ENCODE measurements at regions of chr9 and their contacts with region 1.

Region 1: DNA sequence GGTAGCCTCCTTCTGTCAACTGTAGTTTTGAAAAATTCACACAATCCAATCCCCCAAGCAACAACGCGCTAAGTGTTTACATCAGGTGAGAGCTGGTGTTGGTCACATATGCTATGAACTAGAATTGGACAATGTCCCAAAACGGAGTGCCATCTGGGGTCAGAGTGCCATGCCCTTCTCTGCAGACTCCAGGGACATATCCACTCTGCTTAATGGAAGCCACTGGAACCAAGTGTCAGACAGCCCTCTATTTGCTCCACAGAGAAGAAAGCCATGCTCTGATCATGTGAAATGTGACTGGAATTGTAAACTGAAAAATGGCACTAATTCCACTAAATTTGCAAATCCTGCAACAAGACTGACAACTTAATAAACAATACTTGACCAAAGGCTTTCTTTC is 12.2 kb downstream of the ABCA1 start:
- DNase-seq: no peak
- ATAC-seq: no peak
- H3K4me3 ChIP-seq: no peak overlapping the region
- H3K4me3 Mint-ChIP-seq: no peak overlapping the region
- H3K27ac ChIP-seq: no peak overlapping the region
- H3K27ac Mint-ChIP-seq: no peak overlapping the region
- H3K4me1 ChIP-seq: no peaks in the 10 kb centered on the region
- H3K4me1 Mint-ChIP-seq: peaks cover 0 to 62% (median 7%) of the 10 kb centered on the region in 7 donors
- H3K27me3 ChIP-seq: no peaks in the 10 kb centered on the region
- H3K27me3 Mint-ChIP-seq: peaks cover 0 to 22% (median 0%) of the 10 kb centered on the region in 5 donors

Region 2: DNA sequence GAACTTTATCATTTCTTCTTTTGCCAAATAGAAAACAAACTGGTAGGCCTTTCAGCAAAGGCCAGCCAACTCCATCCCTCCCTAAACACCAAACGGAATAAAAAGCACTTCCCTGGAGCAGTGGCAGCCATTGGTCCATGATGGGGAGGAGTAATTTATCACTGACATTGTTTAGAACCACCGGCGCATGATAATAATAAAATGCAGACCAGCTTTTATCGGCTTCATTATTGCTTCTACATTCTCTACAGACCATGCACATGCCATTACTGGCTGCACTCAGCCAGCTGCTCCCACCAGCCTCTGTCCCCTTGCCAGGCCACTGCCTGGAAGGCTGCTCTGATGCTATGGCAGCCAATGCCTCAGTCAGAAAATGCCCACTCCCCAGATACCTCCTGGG is 33.7 kb before region 1 on chr9:
- CTCF ChIA-PET with region 1: no interaction called
- POLR2A ChIA-PET with region 1: no interaction called
- intact Hi-C with region 1: loop called in 1 of 2 experiments (anchors 1 kb)
- DNase-seq: no peak
- ATAC-seq: no peak
- H3K4me3 ChIP-seq: no peak overlapping the region
- H3K4me3 Mint-ChIP-seq: no peak overlapping the region
- H3K27ac ChIP-seq: no peak overlapping the region
- H3K27ac Mint-ChIP-seq: peak overlapping the region in 1 of 9 donors; percentile 12
- H3K4me1 ChIP-seq: no peaks in the 10 kb centered on the region
- H3K4me1 Mint-ChIP-seq: peaks cover 0 to 7% (median 0%) of the 10 kb centered on the region in 7 donors
- H3K27me3 ChIP-seq: no peaks in the 10 kb centered on the region
- H3K27me3 Mint-ChIP-seq: no peaks in the 10 kb centered on the region

Region 3: DNA sequence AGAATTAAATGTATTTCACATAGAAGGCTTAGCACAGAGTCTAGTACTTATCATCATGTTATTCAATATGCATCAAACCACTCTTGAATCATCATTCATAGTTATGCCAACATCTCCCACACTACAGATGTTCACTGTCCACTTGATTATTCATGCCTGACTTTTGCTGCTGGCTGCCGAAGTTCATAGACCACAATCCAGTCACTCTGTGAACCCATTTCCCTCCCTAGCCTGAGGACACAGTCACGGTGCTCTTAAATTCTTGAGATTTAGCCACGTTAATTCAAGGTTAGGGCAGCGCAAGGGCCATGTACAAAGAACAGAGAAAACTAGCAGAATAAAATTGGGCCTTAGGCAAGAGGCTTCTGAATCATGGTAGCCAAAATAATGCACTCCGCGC is 20.2 kb before region 1 on chr9:
- CTCF ChIA-PET with region 1: no interaction called
- POLR2A ChIA-PET with region 1: no interaction called
- intact Hi-C with region 1: no loop called
- DNase-seq: no peak
- ATAC-seq: no peak
- H3K4me3 ChIP-seq: no peak overlapping the region
- H3K4me3 Mint-ChIP-seq: no peak overlapping the region
- H3K27ac ChIP-seq: no peak overlapping the region
- H3K27ac Mint-ChIP-seq: peak overlapping the region in 2 of 9 donors; percentile 9 to 48
- H3K4me1 ChIP-seq: peaks cover 0 to 5% of the 10 kb centered on the region in 2 donors
- H3K4me1 Mint-ChIP-seq: peaks cover 0 to 47% (median 18%) of the 10 kb centered on the region in 7 donors
- H3K27me3 ChIP-seq: no peaks in the 10 kb centered on the region
- H3K27me3 Mint-ChIP-seq: no peaks in the 10 kb centered on the region